Posterior vena cava (tissue), 2 donors: ENCODE measurements at regions of chr1 and their contacts with region 1.

Region 1: GRCh38 chr1:9196129-9197040 is 38.2 kb upstream of the H6PD start:
- DNase-seq: peak; percentile 88

Region 2: DNA sequence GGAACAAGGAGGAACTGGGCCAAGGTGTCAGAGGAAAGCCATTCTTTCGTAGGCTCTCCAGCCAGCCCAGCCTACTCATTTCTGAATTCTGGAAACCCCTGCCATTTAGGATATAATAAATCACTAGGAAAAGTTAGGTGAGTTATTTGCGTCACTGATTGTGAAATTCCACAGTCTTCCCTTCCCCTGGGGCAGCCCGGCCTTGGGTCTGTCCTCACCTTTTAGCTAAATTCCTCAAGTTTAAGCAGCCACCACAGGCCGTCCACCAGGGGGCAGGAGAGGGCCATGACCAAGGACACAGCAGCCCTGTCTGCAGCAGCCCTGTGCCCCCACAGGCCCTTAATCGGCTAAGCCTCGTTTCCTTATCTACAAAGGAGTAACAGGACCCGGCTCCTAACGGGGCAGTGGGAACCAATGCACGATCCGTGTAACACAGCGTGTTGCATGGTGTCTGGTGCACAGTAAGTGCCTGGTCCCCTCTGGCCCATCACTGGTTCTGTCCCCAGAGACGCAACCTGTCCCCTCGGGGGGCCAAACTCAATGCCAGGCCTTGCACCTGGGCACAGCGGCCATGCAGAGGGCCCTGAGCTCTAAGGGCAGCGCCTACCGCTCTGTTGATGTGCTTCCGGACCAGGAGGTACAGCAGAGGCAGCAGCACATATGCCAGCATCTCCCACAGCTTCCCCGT is 85.6 kb before region 1 on chr1:
- intact Hi-C with region 1: loop called in 1 of 2 experiments (anchors 5 kb)
- DNase-seq: peak; percentile 96

Region 3: DNA sequence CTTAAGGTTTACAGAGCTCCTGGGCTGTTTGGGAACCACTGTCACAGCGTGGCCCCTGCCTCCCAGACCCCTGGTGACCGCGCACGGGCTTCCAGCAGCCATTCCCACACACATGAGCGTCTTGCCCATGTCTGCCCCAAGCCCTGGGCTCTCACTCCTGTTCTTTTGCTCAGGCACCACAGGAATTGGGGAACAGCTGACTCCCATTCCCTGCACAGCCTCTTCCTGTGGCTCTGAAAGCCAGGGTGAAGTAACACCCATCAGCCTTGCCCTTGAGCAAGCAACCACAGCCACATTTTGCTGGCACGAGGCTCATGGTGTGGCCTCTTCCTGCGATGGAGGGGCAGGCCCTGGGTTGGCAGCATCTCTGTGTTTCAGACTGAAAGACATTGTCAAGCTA is 53.1 kb before region 1 on chr1:
- intact Hi-C with region 1: loop called (anchors 2 to 5 kb)
- DNase-seq: peak; percentile 86

Region 4: GRCh38 chr1:9234223-9235095 is 38.1 kb after region 1 on chr1 and contains the start of gene H6PD:
- intact Hi-C with region 1: loop called in 1 of 2 experiments (anchors 5 kb)
- DNase-seq: peak; percentile 95
- total RNA-seq, gene H6PD: 56.0 to 59.6 TPM